ENCODE measurements at regions of chr16 and their contacts with region 1.

Region 1: DNA sequence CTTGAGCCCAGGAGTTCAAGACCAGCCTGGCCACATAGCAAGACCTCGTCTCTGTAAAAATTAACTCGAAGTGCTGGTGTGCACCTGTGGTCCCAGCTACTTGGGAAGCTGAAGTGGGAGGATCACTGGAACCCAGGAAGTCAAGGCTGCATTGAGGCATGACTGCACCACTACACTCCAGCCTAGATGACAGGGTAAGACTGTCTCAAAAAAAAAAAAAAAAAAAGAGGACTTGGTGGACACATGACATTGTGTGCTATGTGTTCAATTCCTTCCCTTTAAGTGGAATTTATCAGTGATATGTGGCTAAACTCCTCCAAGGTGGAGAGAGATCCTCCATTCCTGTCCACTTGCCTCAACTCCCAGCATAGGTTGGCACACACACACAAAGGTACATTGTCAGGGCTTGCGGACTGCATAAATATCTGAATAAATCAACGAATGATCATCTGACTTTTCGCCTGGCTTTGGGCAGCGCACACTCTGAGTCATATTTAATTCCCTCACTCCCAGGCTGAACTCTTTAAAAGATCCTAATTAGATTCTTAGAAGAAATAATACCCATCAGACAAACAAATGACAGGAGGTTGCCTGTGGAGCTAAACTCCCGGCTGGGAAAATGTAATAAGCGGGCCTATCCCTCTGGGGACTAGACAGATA is 25.0 kb upstream of the SYT17 start:
- DNase-seq: no peak
- ATAC-seq: no peak
- H3K4me3 ChIP-seq: no peak overlapping the region
- H3K27ac ChIP-seq: no peak overlapping the region
- H3K4me1 ChIP-seq: peaks cover 6 to 17% of the 10 kb centered on the region in 2 donors
- H3K27me3 ChIP-seq: peaks cover 0 to 3% (median 0%) of the 10 kb centered on the region in 3 donors
- CTCF ChIP-seq: no peak
- POLR2A ChIP-seq: no peak

Region 2: DNA sequence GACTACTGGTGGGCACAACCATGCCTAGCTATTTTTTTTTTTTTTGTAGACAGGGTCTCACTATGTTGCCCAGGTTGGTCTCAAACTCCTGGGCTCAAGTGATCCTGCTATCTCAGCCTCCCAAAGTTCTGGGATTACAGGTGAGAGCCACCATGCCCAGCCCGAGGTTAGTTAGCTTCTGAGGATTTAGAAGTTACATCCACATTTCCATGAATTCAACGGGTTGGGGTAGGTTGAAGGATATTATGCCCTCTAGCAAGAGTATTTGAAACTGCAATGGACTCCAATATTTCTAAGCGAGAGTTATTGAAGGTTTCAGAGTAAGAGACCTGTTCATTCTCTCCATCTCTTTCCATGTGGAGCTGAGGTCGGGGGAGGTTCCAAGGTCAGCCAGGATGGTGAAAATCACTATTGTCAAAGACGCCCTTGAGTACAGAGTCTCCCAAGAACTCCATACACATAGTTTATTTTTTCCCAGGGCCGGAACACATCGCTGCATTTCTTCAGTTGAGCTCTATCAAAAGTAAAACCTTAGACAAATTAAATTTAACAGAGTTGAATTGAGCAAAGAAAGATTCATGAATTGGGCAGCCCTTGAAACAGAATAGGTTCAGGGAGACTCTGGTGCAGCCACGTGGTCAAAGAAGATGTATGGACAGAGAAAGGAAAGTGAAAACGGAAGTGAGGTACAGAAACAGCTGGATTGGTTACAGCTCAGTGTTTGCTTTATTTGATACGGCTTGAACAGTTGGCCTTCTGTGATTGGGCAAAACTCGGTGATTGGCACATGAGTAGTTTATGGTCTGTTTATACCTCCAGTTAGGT is 48.3 kb before region 1 on chr16:
- in situ Hi-C with region 1: no loop called
- intact Hi-C with region 1: loop called (anchors 5 kb)
- DNase-seq: no peak
- ATAC-seq: no peak
- H3K4me3 ChIP-seq: no peak overlapping the region
- H3K27ac ChIP-seq: no peak overlapping the region
- H3K4me1 ChIP-seq: no peaks in the 10 kb centered on the region
- H3K27me3 ChIP-seq: no peaks in the 10 kb centered on the region
- CTCF ChIP-seq: no peak
- POLR2A ChIP-seq: no peak

Measured in gastrocnemius medialis (tissue), 4 donors.